Head of caudate nucleus (tissue), 42 donors: ENCODE measurements at regions of chr20 and their contacts with region 1.

Region 1: DNA sequence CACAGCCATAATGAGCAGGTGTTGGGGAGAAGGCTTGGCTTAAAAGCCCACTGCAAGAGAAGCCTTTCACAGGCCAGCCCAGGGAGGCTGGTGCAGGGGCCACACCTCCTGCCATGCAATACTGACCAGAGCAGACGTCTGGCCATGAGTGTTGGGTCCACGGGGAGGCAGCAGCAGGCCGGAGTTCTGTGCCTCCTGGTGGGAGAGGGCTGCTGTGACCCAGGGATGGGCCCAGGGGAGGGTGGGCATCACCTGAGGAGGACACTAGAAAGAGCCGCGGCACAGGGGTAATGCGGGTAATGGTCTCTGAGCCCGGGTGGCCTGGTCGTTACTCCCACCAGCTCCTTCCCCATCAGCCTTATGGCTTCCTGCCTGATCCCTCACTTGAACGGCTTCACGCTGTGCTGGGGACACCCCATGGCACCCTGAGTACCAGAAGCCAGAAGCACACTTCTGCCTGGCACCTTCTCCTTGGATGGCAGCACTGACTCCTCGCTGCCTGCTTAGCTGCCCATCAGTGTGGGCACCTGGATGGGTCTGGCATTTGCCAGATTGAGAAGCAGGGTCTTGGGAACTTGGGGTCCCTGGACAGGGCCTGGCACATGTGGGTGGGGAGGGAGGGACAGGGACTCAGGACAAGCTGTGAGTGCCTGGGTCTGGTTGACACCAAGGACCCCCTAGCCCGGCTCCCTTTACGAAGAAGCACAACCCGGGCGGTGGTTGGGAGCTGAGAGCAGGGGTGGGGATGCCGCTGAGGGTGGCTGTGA is 108.8 kb downstream of the ASXL1 start:
- DNase-seq: peak in 5 of 42 donors; percentile 48 to 66 (median 48)

Region 2: DNA sequence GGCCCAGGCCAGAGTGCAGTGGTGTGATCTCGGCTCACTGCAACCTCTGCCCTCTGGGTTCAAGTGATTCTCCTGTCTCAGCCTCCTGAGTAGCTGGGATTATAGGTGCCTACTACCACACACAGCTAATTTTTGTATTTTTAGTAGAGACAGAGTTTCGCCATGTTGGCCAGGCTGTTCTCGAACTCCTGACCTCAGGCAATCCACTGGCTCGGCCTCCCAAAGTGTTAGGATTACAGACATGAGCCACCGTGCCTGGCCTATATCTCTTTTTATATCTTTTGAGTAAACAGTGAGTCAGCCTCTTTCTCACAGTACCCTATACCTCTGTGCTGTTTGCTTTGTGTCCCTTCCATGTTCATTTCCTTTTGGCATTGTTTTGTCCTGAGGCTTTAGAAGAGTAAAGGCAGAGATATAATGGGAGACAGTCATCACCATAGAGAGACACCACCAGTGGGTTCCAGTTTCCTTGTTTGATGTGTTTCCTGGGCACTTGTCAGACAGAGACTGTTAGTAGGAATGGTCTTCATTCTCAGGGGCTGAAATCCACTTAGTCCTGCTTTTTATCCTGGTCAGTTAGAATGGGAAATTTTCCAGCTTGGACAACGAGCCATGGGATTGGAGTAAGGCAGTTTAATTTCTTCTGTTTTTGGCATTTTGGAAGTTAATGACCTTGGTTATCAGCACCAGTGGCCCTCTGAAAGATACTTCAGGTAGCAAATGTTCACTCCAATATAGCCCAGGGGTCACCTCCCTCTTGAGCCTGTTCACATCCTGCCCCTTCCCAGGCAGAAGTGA is 141.0 kb before region 1 on chr20:
- intact Hi-C with region 1: no loop called
- DNase-seq: no peak

Region 3: DNA sequence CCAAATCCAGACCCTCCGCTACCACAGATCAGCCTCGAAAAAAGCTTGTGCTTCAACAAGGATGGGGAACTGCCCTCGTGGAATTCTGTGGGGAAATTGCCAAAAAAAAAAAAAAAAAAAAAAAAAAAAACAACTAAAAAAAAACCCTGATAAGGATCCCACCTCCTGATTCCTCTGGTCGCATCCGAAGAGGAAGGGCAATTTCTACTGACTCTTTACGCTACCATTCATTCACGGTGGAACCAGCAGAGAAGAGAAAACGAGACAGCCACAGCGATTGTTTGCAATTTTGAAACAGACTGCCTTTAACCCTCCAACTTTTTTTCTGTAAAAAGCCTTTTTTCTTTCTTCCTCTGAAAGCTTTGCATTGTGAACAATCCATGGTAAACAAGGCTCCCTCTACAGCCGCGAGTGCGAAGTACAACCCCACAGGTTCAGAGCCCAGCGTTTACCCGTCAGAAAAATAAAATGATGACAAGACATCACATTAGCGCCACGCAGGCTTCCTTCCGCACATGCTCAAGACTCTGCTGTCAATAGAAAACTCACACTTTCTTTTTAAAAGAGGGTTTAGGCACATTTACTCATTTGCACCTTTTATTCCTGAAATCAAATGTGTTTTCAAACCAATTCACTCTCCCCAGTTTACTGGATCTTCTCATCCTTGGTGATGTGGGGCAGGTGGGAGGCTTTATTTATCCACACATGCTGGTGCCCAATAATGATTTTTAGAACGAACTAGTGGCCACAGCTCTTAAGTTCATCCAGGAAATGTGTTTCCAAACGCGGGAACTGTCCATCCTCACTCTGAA is 18.2 kb after region 1 on chr20:
- intact Hi-C with region 1: loop called (anchors 2 kb)
- DNase-seq: peak; percentile 73 to 96 (median 88)